ENCODE measurements at regions of chr4 and their contacts with region 1.

Region 1: DNA sequence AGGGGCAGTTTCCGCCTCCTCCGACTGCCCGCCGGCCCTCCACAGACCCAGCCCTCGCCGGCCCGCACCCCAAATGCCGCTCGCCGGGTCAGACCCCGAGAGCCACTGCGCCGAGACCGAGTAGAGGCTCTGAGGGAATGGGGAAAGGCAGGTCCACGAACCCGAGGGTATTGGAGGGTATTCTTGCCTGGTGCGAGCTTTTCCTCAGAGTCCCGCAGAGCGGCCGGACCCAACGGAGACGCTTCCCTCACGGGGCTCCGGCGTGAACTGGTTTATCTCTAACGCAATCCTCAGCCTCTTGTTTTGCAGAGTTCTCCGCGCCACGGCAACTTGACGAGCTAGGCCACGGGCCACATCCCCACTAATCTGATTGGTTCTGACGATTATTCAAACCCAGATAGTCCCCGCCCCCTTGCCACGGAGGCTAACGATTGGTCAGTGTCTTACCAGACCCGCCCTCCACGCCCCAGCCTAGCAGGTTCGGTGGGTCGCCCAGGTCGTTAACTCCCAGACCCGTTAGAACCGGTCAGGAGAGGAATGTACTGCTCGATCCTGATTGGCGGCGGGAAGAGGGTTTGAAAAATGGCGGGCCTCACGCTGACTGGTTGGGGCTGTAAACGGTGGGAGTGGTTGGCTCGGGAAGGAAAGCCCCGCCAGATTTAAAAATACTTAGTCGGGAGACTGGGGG is at the start of gene HMGB2:
- DNase-seq: peak; percentile 100
- ATAC-seq: peak; percentile 94
- H3K4me3 ChIP-seq: peak within 1 kb of the TSS; percentile 75
- H3K27ac ChIP-seq: peak within 1 kb of the TSS; percentile 89
- H3K4me1 ChIP-seq: no peaks in the 10 kb centered on the region
- H3K27me3 ChIP-seq: no peaks in the 10 kb centered on the region
- CTCF ChIP-seq: no peak
- POLR2A ChIP-seq: peak; percentile 98
- RAD21 ChIP-seq: no peak
- total RNA-seq, gene HMGB2: 49.3 and 112 TPM in 2 replicates

Region 2: GRCh38 chr4:173478201-173478912 is 144.1 kb after region 1 on chr4:
- CTCF ChIA-PET with region 1: no interaction called
- POLR2A ChIA-PET with region 1: no interaction called
- dilution Hi-C with region 1: no loop called
- in situ Hi-C with region 1: no loop called
- intact Hi-C with region 1: loop called (anchors 5 kb)
- DNase-seq: peak; percentile 54
- ATAC-seq: peak; percentile 78
- H3K4me3 ChIP-seq: no peak overlapping the region
- H3K27ac ChIP-seq: peak overlapping the region; percentile 71; the same call in 1 of the 2 replicates
- H3K4me1 ChIP-seq: peaks cover 2% of the 10 kb centered on the region; the same call in 1 of the 2 replicates
- H3K27me3 ChIP-seq: no peaks in the 10 kb centered on the region
- CTCF ChIP-seq: no peak
- POLR2A ChIP-seq: no peak
- RAD21 ChIP-seq: no peak

Region 3: GRCh38 chr4:173494013-173494970 is 160.1 kb after region 1 on chr4:
- CTCF ChIA-PET with region 1: no interaction called
- POLR2A ChIA-PET with region 1: no interaction called
- dilution Hi-C with region 1: no loop called
- in situ Hi-C with region 1: no loop called
- intact Hi-C with region 1: loop called (anchors 2 kb)
- DNase-seq: peak; percentile 62
- ATAC-seq: peak; percentile 73
- H3K4me3 ChIP-seq: peak overlapping the region; percentile 47
- H3K27ac ChIP-seq: no peak overlapping the region
- H3K4me1 ChIP-seq: peaks cover 16% of the 10 kb centered on the region
- H3K27me3 ChIP-seq: peaks cover 32% of the 10 kb centered on the region
- CTCF ChIP-seq: peak; percentile 70
- POLR2A ChIP-seq: no peak
- RAD21 ChIP-seq: peak; percentile 69

Measured in IMR-90 (cell line).